Thyroid gland (tissue), 4 donors: ENCODE measurements at regions of chr4 and their contacts with region 1.

Region 1: DNA sequence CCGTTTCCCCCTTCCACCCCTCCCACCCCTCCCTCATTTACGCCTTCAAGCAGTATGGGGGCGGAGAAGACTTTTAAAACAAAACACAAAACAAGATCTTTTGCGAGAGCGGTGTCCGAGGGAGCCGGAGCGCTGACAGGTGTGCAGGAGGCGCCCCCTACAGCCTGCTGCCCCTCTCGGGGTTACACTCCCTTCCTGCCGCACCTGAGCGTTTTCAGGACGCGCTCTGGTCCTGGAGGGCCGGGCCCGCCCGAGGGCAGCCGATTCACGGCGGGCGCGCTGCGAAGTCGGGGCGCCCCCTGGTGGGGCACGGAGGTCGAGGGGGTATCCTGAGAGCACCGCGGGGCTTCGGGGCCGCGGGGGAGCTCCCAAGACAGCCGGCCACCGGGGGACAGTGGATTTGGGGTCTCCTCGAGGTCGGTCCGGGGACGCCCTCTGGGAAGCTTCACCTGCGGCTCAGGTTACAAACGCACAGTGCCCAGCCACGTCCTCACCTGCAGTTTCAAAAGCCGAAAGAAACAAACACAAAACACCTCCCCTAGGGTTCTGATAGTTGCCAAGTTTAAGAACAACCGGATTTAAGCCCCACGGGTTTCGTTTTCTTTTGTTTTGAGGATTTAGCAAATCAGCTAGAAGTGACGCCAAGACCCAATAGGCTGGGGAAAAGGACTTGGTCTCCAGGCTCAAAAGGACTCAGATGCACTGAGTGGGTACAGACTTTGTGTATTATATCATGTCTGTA is 8.0 kb upstream of the NEUROG2 start:
- DNase-seq: peak; percentile 54 to 64
- H3K4me3 ChIP-seq: peak overlapping the region in 1 of 3 donors; percentile 7
- H3K27ac ChIP-seq: no peak overlapping the region
- H3K4me1 ChIP-seq: peaks cover 5 to 24% of the 10 kb centered on the region in 2 donors
- H3K27me3 ChIP-seq: peaks cover 68% of the 10 kb centered on the region
- CTCF ChIP-seq: peak in 5 of 6 experiments; percentile 38 to 74 (median 53)
- POLR2A ChIP-seq: no peak

Region 2: GRCh38 chr4:112214390-112215264 is 309.3 kb before region 1 on chr4:
- intact Hi-C with region 1: loop called (anchors 10 kb)
- DNase-seq: no peak
- H3K4me3 ChIP-seq: no peak overlapping the region
- H3K27ac ChIP-seq: no peak overlapping the region
- H3K4me1 ChIP-seq: no peaks in the 10 kb centered on the region
- H3K27me3 ChIP-seq: no peaks in the 10 kb centered on the region
- CTCF ChIP-seq: peak in 3 of 6 experiments; percentile 53 to 72 (median 61)
- POLR2A ChIP-seq: no peak

Region 3: DNA sequence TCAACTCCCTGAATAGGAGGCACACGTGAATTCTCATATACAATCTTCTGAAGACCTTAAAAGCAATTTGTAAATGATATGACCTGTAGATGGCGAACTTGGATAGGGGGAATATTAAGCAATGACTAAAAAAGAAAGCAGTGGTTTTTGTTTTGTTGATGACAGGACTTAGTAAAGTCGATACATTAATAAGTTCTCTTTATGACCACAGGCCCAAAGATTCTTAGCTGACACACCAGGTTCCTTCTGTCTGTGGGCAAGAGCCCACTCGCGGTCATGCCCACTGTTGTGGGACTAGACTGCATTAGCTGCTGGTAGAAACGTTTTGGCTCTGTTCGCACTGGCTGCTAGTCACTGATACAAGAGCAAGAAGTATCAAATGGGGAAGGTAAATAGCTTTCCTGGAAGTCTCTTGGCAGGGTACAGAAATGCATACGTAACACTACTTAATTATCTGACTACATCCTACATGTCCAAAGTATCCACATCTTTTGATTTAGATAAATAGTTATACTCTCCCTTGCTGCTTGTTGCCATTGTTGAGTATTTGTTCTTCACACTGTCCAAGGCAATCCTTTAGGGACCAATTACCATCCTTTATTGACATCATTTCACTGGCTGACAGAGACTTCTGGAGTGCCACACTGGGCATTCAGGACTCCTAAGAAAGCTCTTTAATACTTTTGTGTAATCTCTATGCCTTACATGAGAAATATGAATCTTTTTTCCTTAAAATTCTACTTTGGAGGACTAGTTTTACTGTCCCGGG is 195.8 kb before region 1 on chr4:
- intact Hi-C with region 1: loop called (anchors 10 kb)
- DNase-seq: no peak
- H3K4me3 ChIP-seq: no peak overlapping the region
- H3K27ac ChIP-seq: no peak overlapping the region
- H3K4me1 ChIP-seq: no peaks in the 10 kb centered on the region
- H3K27me3 ChIP-seq: no peaks in the 10 kb centered on the region
- CTCF ChIP-seq: peak in 5 of 6 experiments; percentile 8 to 64 (median 51)
- POLR2A ChIP-seq: no peak

Region 4: DNA sequence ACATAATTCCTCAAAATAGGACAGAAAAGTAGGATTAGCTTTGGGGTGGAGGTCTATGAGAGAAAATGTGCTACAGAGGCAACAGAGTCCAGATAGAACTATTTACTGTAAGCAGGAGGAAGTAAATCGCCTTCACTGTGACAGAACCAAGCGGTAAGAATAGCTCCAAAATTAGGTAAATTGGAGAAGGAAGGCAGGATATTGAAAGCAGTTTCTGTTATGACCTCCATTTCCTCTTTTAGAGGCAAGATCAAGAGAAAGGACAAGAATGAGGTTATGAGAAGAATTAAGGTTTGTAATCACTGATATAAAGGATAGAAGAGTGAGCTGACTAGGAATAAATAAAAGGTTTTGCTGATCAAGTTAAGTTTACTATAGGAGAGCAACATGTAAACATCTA is 36.1 kb after region 1 on chr4:
- intact Hi-C with region 1: no loop called
- DNase-seq: no peak
- H3K4me3 ChIP-seq: no peak overlapping the region
- H3K27ac ChIP-seq: no peak overlapping the region
- H3K4me1 ChIP-seq: no peaks in the 10 kb centered on the region
- H3K27me3 ChIP-seq: no peaks in the 10 kb centered on the region
- CTCF ChIP-seq: no peak
- POLR2A ChIP-seq: no peak